Gastrocnemius medialis (tissue), 4 donors: ENCODE measurements at regions of chr10 and their contacts with region 1.

Region 1: GRCh38 chr10:97686962-97687784 is at the start of gene AVPI1:
- DNase-seq: peak; percentile 93 to 95
- ATAC-seq: peak; percentile 91 to 94
- H3K4me3 ChIP-seq: peak within 1 kb of the TSS; percentile 69 to 97 (median 82)
- H3K27ac ChIP-seq: peak within 1 kb of the TSS; percentile 79 to 92 (median 80)
- H3K4me1 ChIP-seq: peaks cover 30 to 39% of the 10 kb centered on the region in 2 donors
- H3K27me3 ChIP-seq: no peaks in the 10 kb centered on the region
- CTCF ChIP-seq: no peak
- POLR2A ChIP-seq: peak; percentile 91 to 95
- total RNA-seq, gene AVPI1: 1.4 to 14.1 (median 3.0) TPM

Region 2: DNA sequence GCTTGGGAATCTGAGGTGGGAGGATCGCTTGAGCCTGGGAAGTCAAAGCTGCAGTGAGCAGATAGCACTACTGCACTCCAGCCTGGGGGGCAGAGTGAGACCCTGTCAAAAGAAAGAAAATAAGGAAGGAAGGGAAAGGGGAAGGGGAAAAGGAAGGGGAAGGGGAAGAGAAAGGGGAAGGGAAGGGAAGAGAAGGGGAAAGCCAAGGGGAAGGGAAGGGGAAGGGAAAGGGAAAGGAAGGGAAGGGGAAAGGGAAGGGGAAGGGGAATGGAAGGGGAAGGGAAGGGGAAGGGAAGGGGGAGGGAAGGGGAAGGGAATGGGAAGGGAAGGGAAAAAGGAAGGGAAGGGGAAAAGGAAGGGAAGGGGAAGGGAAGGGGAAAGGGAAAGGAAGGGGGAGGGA is 436.2 kb before region 1 on chr10:
- in situ Hi-C with region 1: no loop called
- intact Hi-C with region 1: no loop called
- DNase-seq: no peak
- ATAC-seq: no peak
- H3K4me3 ChIP-seq: no peak overlapping the region
- H3K27ac ChIP-seq: no peak overlapping the region
- H3K4me1 ChIP-seq: no peaks in the 10 kb centered on the region
- H3K27me3 ChIP-seq: no peaks in the 10 kb centered on the region
- CTCF ChIP-seq: no peak
- POLR2A ChIP-seq: no peak

Region 3: DNA sequence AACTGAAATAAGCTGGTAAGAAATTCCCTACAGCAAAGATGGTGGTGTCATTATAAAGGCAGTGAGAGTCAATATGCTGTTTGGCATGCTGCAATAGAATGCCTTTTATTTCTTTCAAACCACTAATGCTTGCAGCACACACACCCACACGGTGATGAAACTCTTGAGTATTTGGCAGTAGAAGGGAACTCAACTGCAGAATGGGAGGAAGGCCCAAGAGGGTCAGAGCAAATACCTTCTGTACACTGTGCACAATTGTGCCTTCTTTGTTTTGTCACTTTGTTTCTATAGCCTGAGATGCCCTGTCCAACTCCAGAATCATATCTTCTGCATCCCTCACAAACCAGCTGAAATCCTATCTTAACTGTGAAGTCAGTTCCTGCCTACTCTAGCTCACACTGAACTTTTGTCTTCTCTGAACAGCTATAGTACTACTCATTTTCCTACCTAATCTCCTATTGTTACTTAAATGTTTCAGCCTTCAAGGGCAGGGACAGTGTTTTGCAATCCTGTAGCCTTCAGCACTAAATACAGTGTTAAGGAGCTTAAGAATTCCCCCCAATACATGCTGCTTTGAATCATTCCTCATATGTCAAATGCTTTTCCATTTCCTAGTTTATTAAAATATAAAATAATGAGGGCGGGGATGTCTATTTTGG is 211.1 kb before region 1 on chr10:
- in situ Hi-C with region 1: no loop called
- intact Hi-C with region 1: no loop called
- DNase-seq: no peak
- ATAC-seq: peak in 1 of 2 donors; percentile 53
- H3K4me3 ChIP-seq: no peak overlapping the region
- H3K27ac ChIP-seq: no peak overlapping the region
- H3K4me1 ChIP-seq: no peaks in the 10 kb centered on the region
- H3K27me3 ChIP-seq: no peaks in the 10 kb centered on the region
- CTCF ChIP-seq: no peak
- POLR2A ChIP-seq: no peak

Region 4: GRCh38 chr10:97640174-97640867 is 46.9 kb before region 1 on chr10 and contains the start of gene PI4K2A:
- in situ Hi-C with region 1: no loop called
- intact Hi-C with region 1: loop called (anchors 2 kb)
- DNase-seq: peak; percentile 99
- ATAC-seq: peak; percentile 99
- H3K4me3 ChIP-seq: peak within 1 kb of the TSS; percentile 74 to 93 (median 88)
- H3K27ac ChIP-seq: peak within 1 kb of the TSS; percentile 60 to 85 (median 73)
- H3K4me1 ChIP-seq: peaks cover 16 to 20% of the 10 kb centered on the region in 2 donors
- H3K27me3 ChIP-seq: no peaks in the 10 kb centered on the region
- CTCF ChIP-seq: no peak
- POLR2A ChIP-seq: peak; percentile 77 to 90
- total RNA-seq, gene PI4K2A: 16.1 to 18.5 (median 17.9) TPM

Region 5: DNA sequence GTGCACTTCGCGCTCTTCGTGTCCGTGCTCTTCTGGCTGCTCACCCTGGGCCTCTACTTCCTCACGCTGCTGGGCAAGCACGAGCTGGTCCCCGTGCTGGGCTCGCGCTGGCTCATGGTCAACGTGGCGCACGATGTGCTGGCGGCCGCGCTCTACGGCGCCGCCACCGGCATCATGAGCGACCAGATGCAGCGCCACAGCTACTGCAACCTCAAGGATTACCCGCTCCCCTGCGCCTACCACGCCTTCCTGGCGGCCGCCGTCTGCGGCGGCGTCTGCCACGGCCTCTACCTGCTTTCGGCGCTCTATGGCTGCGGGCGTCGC is 26.8 kb after region 1 on chr10:
- in situ Hi-C with region 1: no loop called
- intact Hi-C with region 1: no loop called
- DNase-seq: peak; percentile 46 to 62
- ATAC-seq: peak; percentile 74 to 79
- H3K4me3 ChIP-seq: peak overlapping the region; percentile 57 to 91 (median 68)
- H3K27ac ChIP-seq: peak overlapping the region; percentile 63 to 85 (median 78)
- H3K4me1 ChIP-seq: peaks cover 13 to 19% of the 10 kb centered on the region in 2 donors
- H3K27me3 ChIP-seq: peaks cover 6 to 13% (median 7%) of the 10 kb centered on the region in 3 donors
- CTCF ChIP-seq: peak in 2 of 5 experiments; percentile 9 to 30
- POLR2A ChIP-seq: peak in 1 of 2 donors; percentile 14

Region 6: GRCh38 chr10:97822261-97822687 is 135.1 kb after region 1 on chr10:
- in situ Hi-C with region 1: no loop called
- intact Hi-C with region 1: loop called (anchors 5 kb)
- DNase-seq: peak; percentile 75 to 91
- ATAC-seq: peak; percentile 64 to 71
- H3K4me3 ChIP-seq: peak overlapping the region in 3 of 4 donors; percentile 35 to 47 (median 38)
- H3K27ac ChIP-seq: peak overlapping the region; percentile 96 to 98 (median 98)
- H3K4me1 ChIP-seq: peaks cover 33 to 49% of the 10 kb centered on the region in 2 donors
- H3K27me3 ChIP-seq: no peaks in the 10 kb centered on the region
- CTCF ChIP-seq: no peak
- POLR2A ChIP-seq: peak in 1 of 2 donors; percentile 52

Region 7: GRCh38 chr10:98758463-98758862 is 1071.3 kb after region 1 on chr10:
- in situ Hi-C with region 1: no loop called
- intact Hi-C with region 1: no loop called
- DNase-seq: no peak
- ATAC-seq: no peak
- H3K4me3 ChIP-seq: no peak overlapping the region
- H3K27ac ChIP-seq: no peak overlapping the region
- H3K4me1 ChIP-seq: no peaks in the 10 kb centered on the region
- H3K27me3 ChIP-seq: no peaks in the 10 kb centered on the region
- CTCF ChIP-seq: no peak
- POLR2A ChIP-seq: no peak